B cell (primary cell): ENCODE measurements at regions of chr5 and their contacts with region 1.

Region 1: GRCh38 chr5:178075840-178076548 is 37.3 kb upstream of the N4BP3 start:
- DNase-seq: peak; percentile 88
- ATAC-seq: peak; percentile 94
- H3K4me3 ChIP-seq: peak overlapping the region in 1 of 5 experiments; percentile 23
- H3K4me3 Mint-ChIP-seq: peak overlapping the region; percentile 74
- H3K27ac ChIP-seq: no peak overlapping the region
- H3K27ac Mint-ChIP-seq: no peak overlapping the region
- H3K4me1 ChIP-seq: peaks cover 0 to 8% of the 10 kb centered on the region in 2 donors
- H3K4me1 Mint-ChIP-seq: peaks cover 6% of the 10 kb centered on the region
- H3K27me3 ChIP-seq: peaks cover 0 to 26% (median 8%) of the 10 kb centered on the region in 4 experiments
- H3K27me3 Mint-ChIP-seq: peaks cover 14% of the 10 kb centered on the region
- CTCF ChIP-seq: peak; percentile 99

Region 2: GRCh38 chr5:177296581-177296980 is 779.4 kb before region 1 on chr5:
- CTCF ChIA-PET with region 1: no interaction called
- POLR2A ChIA-PET with region 1: no interaction called
- intact Hi-C with region 1: no loop called
- DNase-seq: peak; percentile 33
- ATAC-seq: no peak
- H3K4me3 ChIP-seq: no peak overlapping the region
- H3K4me3 Mint-ChIP-seq: peak overlapping the region; percentile 62
- H3K27ac ChIP-seq: peak overlapping the region; percentile 37 to 54
- H3K27ac Mint-ChIP-seq: peak overlapping the region; percentile 54
- H3K4me1 ChIP-seq: peaks cover 47 to 65% of the 10 kb centered on the region in 2 donors
- H3K4me1 Mint-ChIP-seq: peaks cover 60% of the 10 kb centered on the region
- H3K27me3 ChIP-seq: no peaks in the 10 kb centered on the region
- H3K27me3 Mint-ChIP-seq: no peaks in the 10 kb centered on the region
- CTCF ChIP-seq: no peak

Region 3: DNA sequence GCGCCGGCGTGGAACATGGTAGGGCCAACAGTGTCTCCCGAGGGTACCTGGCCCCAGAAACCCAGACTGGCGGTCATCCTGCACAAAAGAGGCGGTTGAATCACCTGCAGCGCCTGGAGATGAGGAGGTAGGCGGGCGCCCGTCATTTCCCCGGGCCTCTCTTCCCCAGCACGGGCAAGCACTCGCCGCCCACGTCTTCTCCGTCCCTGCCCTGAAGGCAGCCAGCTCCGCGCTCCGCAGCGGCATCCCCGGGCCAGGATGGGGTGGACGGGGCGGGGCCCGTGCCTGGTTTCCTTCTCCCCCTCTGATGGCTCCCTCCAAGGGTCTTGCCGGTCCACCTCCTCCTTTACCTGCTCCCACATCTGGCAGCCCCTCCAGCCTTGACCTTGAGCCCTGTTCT is 10.3 kb after region 1 on chr5:
- CTCF ChIA-PET with region 1: interaction called, 49 read pairs
- POLR2A ChIA-PET with region 1: no interaction called
- intact Hi-C with region 1: no loop called
- DNase-seq: no peak
- ATAC-seq: no peak
- H3K4me3 ChIP-seq: no peak overlapping the region
- H3K4me3 Mint-ChIP-seq: no peak overlapping the region
- H3K27ac ChIP-seq: no peak overlapping the region
- H3K27ac Mint-ChIP-seq: no peak overlapping the region
- H3K4me1 ChIP-seq: no peaks in the 10 kb centered on the region
- H3K4me1 Mint-ChIP-seq: peaks cover 2% of the 10 kb centered on the region
- H3K27me3 ChIP-seq: peaks cover 0 to 8% (median 3%) of the 10 kb centered on the region in 4 experiments
- H3K27me3 Mint-ChIP-seq: peaks cover 22% of the 10 kb centered on the region
- CTCF ChIP-seq: no peak

Region 4: GRCh38 chr5:178113199-178113787 is 37.3 kb after region 1 on chr5 and contains the start of gene N4BP3:
- CTCF ChIA-PET with region 1: interaction called, 92 read pairs
- POLR2A ChIA-PET with region 1: no interaction called
- intact Hi-C with region 1: loop called (anchors 1 kb)
- DNase-seq: peak; percentile 91
- ATAC-seq: peak; percentile 63
- H3K4me3 ChIP-seq: peak within 1 kb of the TSS; percentile 26 to 85 (median 74)
- H3K4me3 Mint-ChIP-seq: peak within 1 kb of the TSS; percentile 94
- H3K27ac ChIP-seq: peak within 1 kb of the TSS; percentile 86 to 89
- H3K27ac Mint-ChIP-seq: peak within 1 kb of the TSS; percentile 93
- H3K4me1 ChIP-seq: peaks cover 55 to 62% of the 10 kb centered on the region in 2 donors
- H3K4me1 Mint-ChIP-seq: peaks cover 66% of the 10 kb centered on the region
- H3K27me3 ChIP-seq: no peaks in the 10 kb centered on the region
- H3K27me3 Mint-ChIP-seq: no peaks in the 10 kb centered on the region
- CTCF ChIP-seq: peak; percentile 25
- total RNA-seq, gene N4BP3: 47.2 and 48.7 TPM in 2 replicates

Region 5: GRCh38 chr5:178130604-178131485 is 54.9 kb after region 1 on chr5 and contains the start of gene RMND5B:
- CTCF ChIA-PET with region 1: interaction called, 35 read pairs
- POLR2A ChIA-PET with region 1: no interaction called
- intact Hi-C with region 1: no loop called
- DNase-seq: peak; percentile 92
- ATAC-seq: peak; percentile 87
- H3K4me3 ChIP-seq: peak within 1 kb of the TSS; percentile 17 to 81 (median 78)
- H3K4me3 Mint-ChIP-seq: peak within 1 kb of the TSS; percentile 89
- H3K27ac ChIP-seq: peak within 1 kb of the TSS; percentile 60 to 83
- H3K27ac Mint-ChIP-seq: peak within 1 kb of the TSS; percentile 88
- H3K4me1 ChIP-seq: peaks cover 6 to 16% of the 10 kb centered on the region in 2 donors
- H3K4me1 Mint-ChIP-seq: peaks cover 22% of the 10 kb centered on the region
- H3K27me3 ChIP-seq: no peaks in the 10 kb centered on the region
- H3K27me3 Mint-ChIP-seq: no peaks in the 10 kb centered on the region
- CTCF ChIP-seq: no peak
- total RNA-seq, gene RMND5B: 52.7 and 53.9 TPM in 2 replicates

Region 6: GRCh38 chr5:178153573-178154343 is 77.8 kb after region 1 on chr5 and contains the start of gene NHP2:
- CTCF ChIA-PET with region 1: interaction called, 540 read pairs
- POLR2A ChIA-PET with region 1: interaction called, 4 read pairs
- intact Hi-C with region 1: no loop called
- DNase-seq: peak; percentile 97
- ATAC-seq: peak; percentile 100
- H3K4me3 ChIP-seq: peak within 1 kb of the TSS; percentile 69 to 85 (median 75)
- H3K4me3 Mint-ChIP-seq: peak within 1 kb of the TSS; percentile 97
- H3K27ac ChIP-seq: peak within 1 kb of the TSS in 1 of 2 donors; percentile 70
- H3K27ac Mint-ChIP-seq: peak within 1 kb of the TSS; percentile 86
- H3K4me1 ChIP-seq: peaks cover 12 to 20% of the 10 kb centered on the region in 2 donors
- H3K4me1 Mint-ChIP-seq: peaks cover 30% of the 10 kb centered on the region
- H3K27me3 ChIP-seq: no peaks in the 10 kb centered on the region
- H3K27me3 Mint-ChIP-seq: no peaks in the 10 kb centered on the region
- CTCF ChIP-seq: no peak
- total RNA-seq, gene NHP2: 62.1 and 66.0 TPM in 2 replicates